ENCODE measurements at regions of chr2 and their contacts with region 1.

Region 1: GRCh38 chr2:84865181-84865783 is 15.6 kb downstream of the TRABD2A start:
- DNase-seq: peak; percentile 8
- ATAC-seq: no peak

Region 2: GRCh38 chr2:84247542-84247951 is 617.7 kb before region 1 on chr2:
- intact Hi-C with region 1: no loop called
- DNase-seq: no peak
- ATAC-seq: no peak

Region 3: GRCh38 chr2:84905181-84906107 is 40.2 kb after region 1 on chr2 and contains the start of gene TMSB10:
- intact Hi-C with region 1: loop called (anchors 1 kb)
- DNase-seq: peak; percentile 95
- ATAC-seq: peak; percentile 85
- total RNA-seq, gene TMSB10: 1,367 TPM